ENCODE measurements at regions of chr2 and their contacts with region 1.

Region 1: DNA sequence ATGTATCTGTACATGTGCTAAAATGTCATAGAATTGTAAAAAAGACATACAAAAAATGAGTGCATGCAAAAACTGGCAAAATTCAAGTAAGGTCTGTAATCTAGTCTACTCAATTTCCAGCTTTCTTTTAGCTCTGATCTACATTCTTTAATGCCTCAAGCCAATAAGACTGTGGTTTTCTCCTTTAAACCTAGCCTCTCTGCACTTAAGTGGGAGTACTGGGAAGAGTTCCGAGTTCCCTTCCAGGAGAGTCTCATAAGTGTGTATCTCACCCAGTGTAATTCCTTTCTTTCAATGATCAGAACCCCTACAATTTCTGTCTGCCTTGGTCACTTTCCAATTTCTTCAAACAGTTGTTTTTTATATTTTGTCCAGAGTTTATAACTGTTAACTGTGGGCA is 150.1 kb downstream of the PTRHD1 start:
- DNase-seq: no peak
- H3K4me3 ChIP-seq: no peak overlapping the region
- H3K27ac ChIP-seq: no peak overlapping the region
- H3K4me1 ChIP-seq: peaks cover 12% of the 10 kb centered on the region
- H3K27me3 ChIP-seq: no peaks in the 10 kb centered on the region
- CTCF ChIP-seq: no peak
- POLR2A ChIP-seq: no peak

Region 2: DNA sequence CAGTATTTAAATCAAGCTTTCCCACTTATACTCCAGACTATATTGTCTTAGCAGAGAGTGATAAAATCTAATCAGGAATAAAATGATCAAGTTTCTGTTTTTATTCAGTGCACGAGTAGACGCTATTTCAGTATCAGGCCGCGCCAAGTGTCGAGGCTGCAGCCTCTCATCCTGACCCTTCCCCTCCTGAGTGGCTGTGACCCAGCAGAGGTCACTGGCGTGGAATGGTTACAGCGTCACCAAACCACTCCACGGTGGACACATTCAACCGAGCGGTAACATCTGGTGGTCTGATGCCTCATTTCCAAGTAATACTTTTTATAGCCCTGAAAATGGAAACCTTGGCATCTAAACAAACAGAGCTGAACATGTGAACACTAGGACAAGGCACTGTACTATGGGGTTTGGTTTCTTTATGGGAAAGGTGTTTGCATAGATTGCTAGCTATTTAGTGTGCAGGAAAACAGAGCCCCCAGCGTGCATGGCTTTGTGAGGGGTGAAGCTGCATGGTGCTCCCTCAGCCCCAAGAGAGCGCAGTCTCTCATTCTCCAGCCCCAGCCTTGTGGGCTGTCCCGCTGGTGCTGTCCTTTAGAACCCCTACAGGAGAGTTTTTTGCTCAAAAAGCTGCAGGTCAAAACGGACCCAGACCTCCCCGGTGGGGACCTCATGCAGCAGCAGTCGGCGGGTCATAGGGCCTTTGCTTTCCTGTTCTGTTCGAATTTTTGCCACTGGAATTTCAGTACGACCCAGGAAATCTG is 439.8 kb before region 1 on chr2:
- intact Hi-C with region 1: loop called (anchors 5 kb)
- DNase-seq: no peak
- H3K4me3 ChIP-seq: no peak overlapping the region
- H3K27ac ChIP-seq: no peak overlapping the region
- H3K4me1 ChIP-seq: peaks cover 4% of the 10 kb centered on the region
- H3K27me3 ChIP-seq: no peaks in the 10 kb centered on the region
- CTCF ChIP-seq: no peak
- POLR2A ChIP-seq: no peak

Region 3: DNA sequence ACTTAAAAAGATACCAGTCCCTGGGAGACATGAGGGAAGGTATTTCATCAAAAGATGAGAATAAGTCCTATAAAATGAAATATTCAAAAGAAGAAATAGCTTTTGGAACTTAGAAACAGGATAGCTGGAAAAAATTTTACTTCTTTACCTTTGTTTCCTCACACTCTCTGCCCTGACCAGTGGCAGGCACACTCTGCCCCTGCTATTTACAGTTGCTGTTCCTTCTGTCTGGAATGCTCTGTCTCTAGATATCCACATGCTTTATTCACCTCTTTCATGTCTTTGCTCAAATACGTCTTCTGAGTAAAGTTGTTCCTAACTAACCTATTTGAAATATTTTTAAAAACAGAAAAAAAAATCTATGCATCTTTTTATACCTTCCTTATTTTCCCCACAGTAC is 24.5 kb after region 1 on chr2:
- intact Hi-C with region 1: no loop called
- DNase-seq: no peak
- H3K4me3 ChIP-seq: no peak overlapping the region
- H3K27ac ChIP-seq: no peak overlapping the region
- H3K4me1 ChIP-seq: no peaks in the 10 kb centered on the region
- H3K27me3 ChIP-seq: no peaks in the 10 kb centered on the region
- CTCF ChIP-seq: no peak
- POLR2A ChIP-seq: no peak

Region 4: DNA sequence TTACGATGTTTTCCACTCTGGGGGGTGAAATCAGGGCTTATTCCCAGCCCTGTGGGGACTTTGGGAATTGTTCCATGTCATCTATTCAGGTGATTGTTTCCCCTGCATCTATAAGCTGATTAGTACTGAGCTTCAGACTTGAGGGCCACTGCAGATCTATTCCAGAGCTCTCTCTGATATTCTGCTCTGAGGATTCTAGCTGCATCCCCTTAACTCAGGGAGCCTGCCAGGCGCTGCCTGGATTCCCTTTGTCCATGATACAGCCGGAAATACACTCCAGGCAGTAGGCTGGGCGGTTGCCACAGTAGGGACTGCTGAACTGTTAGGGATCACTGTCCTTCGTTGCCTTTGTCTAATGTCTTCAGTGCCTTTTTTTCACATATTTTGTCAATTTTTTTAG is 118.8 kb after region 1 on chr2:
- intact Hi-C with region 1: no loop called
- DNase-seq: no peak
- H3K4me3 ChIP-seq: no peak overlapping the region
- H3K27ac ChIP-seq: no peak overlapping the region
- H3K4me1 ChIP-seq: no peaks in the 10 kb centered on the region
- H3K27me3 ChIP-seq: no peaks in the 10 kb centered on the region
- CTCF ChIP-seq: no peak
- POLR2A ChIP-seq: no peak